ENCODE measurements at regions of chr2 and their contacts with region 1.

Region 1: GRCh38 chr2:40281021-40281940 is 170.6 kb downstream of the SLC8A1 start:
- DNase-seq: peak; percentile 67
- H3K4me3 ChIP-seq: peak overlapping the region; percentile 63
- H3K27ac ChIP-seq: peak overlapping the region; percentile 84
- H3K4me1 ChIP-seq: peaks cover 86% of the 10 kb centered on the region
- CTCF ChIP-seq: no peak

Region 2: DNA sequence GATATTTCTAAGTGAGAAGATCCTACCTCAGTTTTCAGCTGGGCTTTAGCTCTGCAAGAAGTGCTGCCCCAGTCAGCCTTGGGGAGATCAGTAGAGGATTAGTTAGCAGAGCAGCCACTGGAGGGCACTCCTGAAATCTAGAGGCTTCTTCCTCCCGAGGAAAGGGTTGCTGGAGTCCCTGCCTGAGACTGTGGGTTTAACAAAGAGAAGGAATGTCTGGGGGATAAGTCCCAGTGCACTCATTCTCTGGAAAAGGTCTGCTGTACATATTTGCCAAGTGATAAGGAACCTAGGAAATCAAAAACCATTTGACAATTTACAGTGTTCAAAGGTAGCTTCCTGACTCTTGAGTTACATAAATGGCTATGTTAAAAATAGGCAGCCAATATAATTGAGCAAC is 36.6 kb before region 1 on chr2:
- CTCF ChIA-PET with region 1: no interaction called
- POLR2A ChIA-PET with region 1: interaction called, 7 read pairs
- intact Hi-C with region 1: loop called (anchors 2 kb)
- DNase-seq: peak; percentile 75
- H3K4me3 ChIP-seq: no peak overlapping the region
- H3K27ac ChIP-seq: no peak overlapping the region
- H3K4me1 ChIP-seq: peaks cover 30% of the 10 kb centered on the region
- CTCF ChIP-seq: peak; percentile 88

Region 3: DNA sequence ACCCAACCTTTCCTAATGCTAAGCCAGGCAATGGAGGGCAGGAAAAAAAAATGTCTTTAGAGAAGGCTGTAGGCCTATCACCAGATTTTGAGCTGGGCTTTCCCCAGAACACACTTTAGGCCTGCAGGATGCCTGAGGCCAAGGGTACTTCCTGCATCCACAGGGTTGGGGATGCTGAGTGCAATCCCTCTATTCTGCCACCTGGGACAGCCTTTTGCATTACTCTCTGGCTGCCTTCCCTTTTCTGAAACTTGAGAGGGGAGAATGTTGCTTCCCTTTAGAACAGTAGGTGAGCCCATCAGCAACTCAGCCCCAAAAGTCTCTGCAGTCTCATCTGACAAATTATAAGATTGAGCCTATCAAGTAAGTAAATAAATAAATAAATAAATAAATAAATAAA is 24.6 kb before region 1 on chr2:
- CTCF ChIA-PET with region 1: no interaction called
- POLR2A ChIA-PET with region 1: interaction called, 11 read pairs
- intact Hi-C with region 1: no loop called
- DNase-seq: peak; percentile 55
- H3K4me3 ChIP-seq: no peak overlapping the region
- H3K27ac ChIP-seq: no peak overlapping the region
- H3K4me1 ChIP-seq: peaks cover 40% of the 10 kb centered on the region
- CTCF ChIP-seq: peak; percentile 56

Region 4: DNA sequence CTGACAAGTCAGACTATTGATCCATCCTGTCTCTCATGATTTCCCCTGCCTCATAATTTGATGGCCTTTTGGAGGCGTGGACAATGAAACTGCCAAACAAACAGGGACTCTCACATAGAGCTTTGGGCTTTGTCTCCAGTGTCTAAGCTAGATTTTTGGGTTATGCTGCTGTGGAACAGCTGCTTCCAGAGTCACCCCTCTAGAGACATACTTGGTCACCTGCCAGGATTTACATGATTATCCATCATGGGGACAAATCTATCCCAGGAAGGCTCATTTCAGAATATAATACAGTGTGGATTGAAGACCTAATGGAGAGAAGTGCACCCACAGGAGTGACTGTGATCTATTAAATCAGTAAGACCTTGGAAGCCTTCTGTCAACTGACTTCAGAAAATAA is 11.0 kb after region 1 on chr2:
- CTCF ChIA-PET with region 1: no interaction called
- POLR2A ChIA-PET with region 1: interaction called, 25 read pairs
- intact Hi-C with region 1: no loop called
- DNase-seq: no peak
- H3K4me3 ChIP-seq: no peak overlapping the region
- H3K27ac ChIP-seq: no peak overlapping the region
- H3K4me1 ChIP-seq: peaks cover 27% of the 10 kb centered on the region
- CTCF ChIP-seq: no peak

Region 5: DNA sequence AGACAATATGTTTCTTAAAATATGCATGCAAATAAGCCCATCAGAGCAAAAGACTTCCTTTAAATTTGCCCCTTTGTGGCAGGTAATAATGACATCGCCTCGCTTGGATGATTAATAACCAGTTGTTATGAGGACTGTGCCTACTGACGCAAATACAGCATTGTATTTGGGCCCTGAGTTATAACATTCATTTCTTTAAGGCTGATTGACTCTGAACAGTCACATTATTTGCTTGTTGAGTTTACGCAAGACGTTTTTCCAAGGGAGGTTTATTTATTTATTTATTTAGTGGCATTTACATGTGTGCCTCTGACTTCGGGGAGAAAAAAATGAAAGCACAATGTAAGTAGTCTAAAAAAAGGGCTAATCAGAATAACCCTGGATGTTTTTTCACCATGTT is 82.3 kb after region 1 on chr2:
- CTCF ChIA-PET with region 1: interaction called, 3 read pairs
- POLR2A ChIA-PET with region 1: interaction called, 4 read pairs
- intact Hi-C with region 1: loop called (anchors 2 kb)
- DNase-seq: peak; percentile 82
- H3K4me3 ChIP-seq: peak overlapping the region; percentile 58
- H3K27ac ChIP-seq: peak overlapping the region; percentile 92
- H3K4me1 ChIP-seq: peaks cover 67% of the 10 kb centered on the region
- CTCF ChIP-seq: no peak

Region 6: DNA sequence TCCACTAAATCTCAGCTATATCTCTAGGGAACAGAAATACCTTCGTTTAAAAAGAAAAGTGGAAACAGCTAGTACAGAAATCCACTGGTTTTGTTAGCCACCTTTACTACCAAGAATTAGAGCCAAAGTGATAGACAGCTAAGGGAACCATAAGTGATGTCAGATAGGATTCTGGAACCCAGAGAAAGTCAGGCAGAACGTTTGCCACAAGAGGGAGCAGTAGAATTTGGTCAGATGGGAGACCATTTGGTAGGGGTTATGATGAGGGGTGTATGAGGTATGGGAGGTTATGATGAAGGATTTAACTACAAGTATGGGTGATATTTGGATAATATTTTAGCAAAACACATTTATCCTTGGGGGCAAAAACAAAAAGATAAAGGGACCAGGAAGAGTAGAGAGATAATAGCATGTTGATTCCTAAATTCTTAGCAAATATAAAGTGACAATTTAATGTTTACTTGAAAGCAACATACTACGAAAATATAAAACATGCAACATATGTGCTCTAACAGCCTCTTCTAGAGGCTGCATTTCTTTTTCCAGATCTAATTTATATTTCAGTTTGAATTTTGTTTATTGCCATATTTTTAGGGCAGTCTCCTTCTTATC is 167.3 kb after region 1 on chr2:
- CTCF ChIA-PET with region 1: no interaction called
- POLR2A ChIA-PET with region 1: interaction called, 3 read pairs
- intact Hi-C with region 1: loop called (anchors 5 kb)
- DNase-seq: peak; percentile 68
- H3K4me3 ChIP-seq: no peak overlapping the region
- H3K27ac ChIP-seq: no peak overlapping the region
- H3K4me1 ChIP-seq: peaks cover 45% of the 10 kb centered on the region
- CTCF ChIP-seq: peak; percentile 88